ENCODE measurements at regions of chr17 and their contacts with region 1.

Region 1: GRCh38 chr17:64063766-64064224 is 43.4 kb upstream of the ICAM2 start:
- DNase-seq: peak; percentile 79

Region 2: DNA sequence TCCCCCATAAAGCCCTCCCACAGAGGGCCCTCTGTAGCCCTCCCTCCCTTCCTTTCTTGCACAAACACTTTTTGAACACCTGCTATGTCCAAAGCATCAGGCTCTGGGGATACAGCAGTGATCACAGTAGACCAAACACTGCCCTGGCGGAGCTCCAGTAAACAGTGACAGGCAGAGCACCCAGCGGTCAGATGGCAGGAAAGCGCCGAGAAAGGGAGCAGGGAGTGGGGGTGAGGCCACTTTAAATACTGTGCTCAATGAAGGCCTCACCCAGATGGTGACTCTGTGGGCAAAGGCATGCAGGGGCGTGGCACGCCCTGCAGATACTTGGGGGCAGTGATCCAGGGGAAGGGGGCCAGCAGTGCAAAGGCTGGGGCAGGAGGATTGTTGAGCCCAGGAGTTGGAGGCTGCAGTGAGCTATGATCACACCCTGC is 58.0 kb before region 1 on chr17:
- CTCF ChIA-PET with region 1: no interaction called
- POLR2A ChIA-PET with region 1: no interaction called
- DNase-seq: no peak

Region 3: DNA sequence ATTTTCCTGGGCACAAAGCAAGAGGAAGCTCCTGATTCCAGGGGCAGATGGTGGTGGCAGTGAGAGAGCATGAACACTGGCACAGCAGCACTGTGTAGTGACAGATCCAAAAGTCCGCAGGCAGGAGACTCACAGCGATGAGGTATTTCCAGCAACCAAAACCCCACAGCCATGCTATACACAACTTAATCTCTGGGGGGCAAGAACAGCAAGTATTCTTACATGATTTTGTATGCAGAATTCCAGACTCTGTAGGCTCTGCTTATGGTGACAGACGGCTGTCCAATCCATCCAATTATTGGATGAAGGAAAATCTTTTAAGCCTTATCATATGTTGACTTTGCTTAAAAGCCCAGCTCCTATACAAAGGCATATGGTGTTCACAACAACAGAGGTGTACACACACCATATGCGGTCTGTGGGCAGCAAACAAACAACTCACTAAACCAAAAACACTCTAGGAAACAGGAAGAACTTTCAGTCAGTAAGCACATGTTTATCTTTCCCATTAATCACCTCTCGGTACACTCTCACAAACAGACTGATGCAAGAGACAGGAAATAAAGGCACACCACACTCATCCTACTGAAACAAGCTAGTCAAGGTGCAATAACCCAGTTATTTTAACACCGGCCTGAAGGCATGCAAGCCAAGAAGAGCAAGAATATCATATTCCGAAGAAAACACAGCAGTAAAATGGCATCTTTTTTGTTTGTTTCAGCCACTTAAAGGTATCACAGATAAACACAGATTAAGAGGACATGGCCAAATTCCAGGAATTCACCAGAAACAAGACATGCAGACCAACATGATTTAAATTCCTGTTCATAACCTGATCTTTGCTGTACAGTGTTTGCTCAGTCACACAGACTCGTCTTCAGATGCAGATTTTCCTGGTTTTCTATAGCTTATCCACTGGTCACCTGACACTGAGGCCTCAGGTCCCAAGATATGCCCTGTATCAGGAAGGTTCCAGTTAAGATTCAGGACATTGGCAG is 18.3 kb after region 1 on chr17:
- CTCF ChIA-PET with region 1: interaction called, 12 read pairs
- POLR2A ChIA-PET with region 1: interaction called, 7 read pairs
- DNase-seq: peak; percentile 46